ENCODE measurements at regions of chr10 and their contacts with region 1.

Region 1: DNA sequence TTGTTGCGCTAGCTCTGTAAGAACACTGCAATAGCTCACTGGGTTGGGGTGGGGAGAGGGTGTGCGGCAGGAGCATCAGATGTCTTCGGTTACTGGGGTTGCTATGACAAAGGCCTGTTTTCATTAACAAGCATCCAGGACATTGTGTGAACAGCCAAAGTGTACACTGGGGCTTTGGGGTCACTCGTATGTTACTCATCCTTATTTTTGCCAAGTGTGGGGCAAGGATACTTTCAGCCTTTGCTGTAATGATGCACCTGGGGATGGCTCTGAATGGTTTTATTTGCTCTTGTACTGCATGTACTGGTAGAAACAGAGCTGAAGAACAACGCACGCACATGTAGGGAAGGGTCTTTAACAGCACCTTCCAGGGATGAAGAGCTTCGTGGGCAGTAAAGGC is 73.0 kb upstream of the AFAP1L2 start:
- DNase-seq: no peak
- ATAC-seq: peak in 7 of 8 donors; percentile 3 to 82 (median 27)
- H3K4me3 ChIP-seq: no peak overlapping the region
- H3K27ac ChIP-seq: peak overlapping the region in 9 of 10 donors; percentile 36 to 79 (median 69)
- H3K4me1 ChIP-seq: peaks cover 4 to 93% (median 51%) of the 10 kb centered on the region in 9 donors
- H3K27me3 ChIP-seq: no peaks in the 10 kb centered on the region
- CTCF ChIP-seq: no peak

Region 2: GRCh38 chr10:114526504-114527238 is 49.4 kb after region 1 on chr10:
- intact Hi-C with region 1: loop called in 1 of 10 experiments (anchors 5 kb)
- DNase-seq: peak; percentile 58 to 66
- ATAC-seq: peak; percentile 77 to 88 (median 85)
- H3K4me3 ChIP-seq: peak overlapping the region in 9 of 10 donors; percentile 14 to 49 (median 44)
- H3K27ac ChIP-seq: peak overlapping the region; percentile 8 to 84 (median 76)
- H3K4me1 ChIP-seq: peaks cover 5 to 71% (median 61%) of the 10 kb centered on the region in 9 donors
- H3K27me3 ChIP-seq: no peaks in the 10 kb centered on the region
- CTCF ChIP-seq: peak in 1 of 9 donors; percentile 6

Region 3: DNA sequence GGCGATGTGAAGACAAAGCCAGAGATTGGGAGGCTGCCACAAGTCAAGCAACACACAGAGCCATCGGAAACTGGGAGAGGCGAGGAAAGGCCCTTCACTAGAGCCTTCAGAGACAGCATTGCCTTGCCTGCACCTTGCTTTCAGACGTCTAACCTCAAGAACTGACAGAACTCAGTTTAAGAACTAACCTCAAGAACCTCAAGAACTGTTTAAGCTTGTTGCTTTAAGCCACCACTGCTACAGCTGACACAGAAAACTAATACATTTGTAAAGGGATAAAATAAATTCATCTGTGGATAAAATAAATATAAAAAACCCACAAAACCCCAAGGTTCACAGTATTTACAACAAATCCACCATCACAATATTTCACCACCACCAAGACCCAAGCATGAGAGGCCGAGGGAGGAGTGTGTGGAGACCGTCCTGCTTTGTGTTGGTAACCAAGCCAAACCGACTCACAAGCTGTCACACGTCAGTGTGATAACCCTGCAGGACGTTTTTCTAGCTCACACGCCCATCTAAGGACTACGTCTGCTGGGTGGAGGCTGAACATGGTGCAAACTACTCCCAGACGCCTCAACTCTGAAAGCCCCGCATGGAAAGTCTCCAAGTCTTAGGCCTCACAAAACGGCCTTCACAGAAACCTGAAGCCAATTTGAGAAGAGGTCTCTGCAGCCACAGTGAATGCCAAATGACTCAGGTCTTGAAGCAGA is 64.0 kb after region 1 on chr10:
- intact Hi-C with region 1: loop called in 7 of 10 experiments (anchors 5 kb)
- DNase-seq: peak; percentile 41 to 80
- ATAC-seq: peak; percentile 83 to 95 (median 91)
- H3K4me3 ChIP-seq: no peak overlapping the region
- H3K27ac ChIP-seq: peak overlapping the region; percentile 13 to 87 (median 74)
- H3K4me1 ChIP-seq: peaks cover 16 to 82% (median 65%) of the 10 kb centered on the region in 9 donors
- H3K27me3 ChIP-seq: no peaks in the 10 kb centered on the region
- CTCF ChIP-seq: no peak

Region 4: GRCh38 chr10:115082506-115082905 is 605.2 kb after region 1 on chr10:
- intact Hi-C with region 1: no loop called
- DNase-seq: no peak
- ATAC-seq: no peak
- H3K4me3 ChIP-seq: no peak overlapping the region
- H3K27ac ChIP-seq: no peak overlapping the region
- H3K4me1 ChIP-seq: peaks cover 0 to 5% (median 0%) of the 10 kb centered on the region in 9 donors
- H3K27me3 ChIP-seq: no peaks in the 10 kb centered on the region
- CTCF ChIP-seq: no peak

Measured in heart right ventricle (tissue), 16 donors.